H1 (cell line): ENCODE measurements at regions of chr20 and their contacts with region 1.

Region 1: DNA sequence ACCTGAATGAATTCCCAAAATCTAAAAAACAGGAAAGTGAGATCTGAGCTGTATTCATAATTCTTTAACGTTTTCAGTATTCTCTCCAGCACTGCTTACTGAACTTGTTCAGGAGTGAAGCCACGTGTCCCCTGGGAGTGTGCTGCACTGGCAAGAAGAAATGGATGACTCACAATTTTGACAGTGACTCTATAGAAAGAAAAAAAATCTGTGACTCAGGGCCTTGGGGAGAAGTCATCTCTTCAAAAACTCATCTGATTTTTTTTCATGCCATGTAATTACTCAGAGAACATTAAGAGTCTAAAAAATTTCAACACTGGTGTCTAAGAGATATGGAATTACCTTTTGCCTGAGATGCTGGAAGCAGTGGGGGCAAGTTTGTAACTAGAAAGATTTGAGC is 39.7 kb downstream of the ANKEF1 start:
- DNase-seq: no peak
- H3K4me3 ChIP-seq: no peak overlapping the region
- H3K27ac ChIP-seq: no peak overlapping the region
- H3K4me1 ChIP-seq: no peaks in the 10 kb centered on the region
- H3K27me3 ChIP-seq: peaks cover 0 to under 1% (median 0%) of the 10 kb centered on the region in 4 experiments; a peak in 1 of 7 replicates
- CTCF ChIP-seq: no peak
- EP300 ChIP-seq: no peak
- POLR2A ChIP-seq: no peak
- RAD21 ChIP-seq: no peak

Region 2: DNA sequence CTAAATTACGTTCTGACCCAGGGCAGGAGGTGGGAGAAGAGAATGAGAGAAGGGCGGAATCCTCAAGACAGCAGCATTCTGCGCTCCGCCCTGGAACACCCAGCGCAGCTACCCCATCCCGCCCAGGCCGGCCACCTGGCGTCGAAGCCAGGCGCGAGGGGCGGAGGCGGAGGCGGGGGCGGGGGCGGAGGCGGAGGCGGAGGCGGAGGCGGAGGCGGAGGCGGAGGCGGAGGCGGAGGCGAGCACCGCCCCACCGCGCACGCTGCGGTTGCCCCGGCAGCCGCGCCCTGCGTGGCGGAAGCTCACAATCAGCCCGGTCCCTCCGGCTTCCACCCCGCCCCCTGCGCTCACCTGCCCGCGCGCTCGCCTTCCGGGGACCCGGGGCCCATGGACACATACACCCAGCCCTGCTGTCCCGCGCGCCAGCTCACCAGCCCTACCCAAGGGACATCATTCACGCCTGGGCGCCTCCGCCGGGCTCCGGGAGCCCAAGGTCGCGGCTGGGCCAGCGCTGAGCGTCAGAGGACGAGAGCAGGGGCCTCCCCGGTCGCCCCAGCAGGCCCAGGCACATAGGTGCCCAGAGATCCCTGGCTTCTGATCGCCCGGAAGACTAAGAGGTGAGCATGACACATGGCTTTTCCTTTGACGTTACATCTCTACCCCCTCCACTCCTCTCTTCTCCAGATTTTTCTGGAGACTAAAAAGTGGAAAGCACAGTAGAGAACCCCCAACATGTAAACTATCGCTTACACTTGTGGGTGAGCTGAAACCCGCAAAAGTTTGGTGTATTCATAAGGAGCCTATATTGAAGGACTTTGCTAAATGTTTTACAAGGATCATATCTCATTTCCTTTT is 39.6 kb before region 1 on chr20 and contains the start of gene ANKEF1:
- CTCF ChIA-PET with region 1: interaction called, 17 read pairs
- POLR2A ChIA-PET with region 1: no interaction called
- DNase-seq: peak; percentile 29 to 88
- H3K4me3 ChIP-seq: peak within 1 kb of the TSS; percentile 42 to 73 (median 53)
- H3K27ac ChIP-seq: no peak within 1 kb of the TSS
- H3K4me1 ChIP-seq: peaks cover 0 to 3% (median 1%) of the 10 kb centered on the region in 4 experiments; a peak in 2 of 7 replicates
- H3K27me3 ChIP-seq: no peaks in the 10 kb centered on the region
- CTCF ChIP-seq: 0 out of 4 replicates have a peak, but pooled peaks of 1 of the 3 experiments have one; percentile 8
- EP300 ChIP-seq: peak in 1 of 2 experiments; percentile 11; a peak in 1 of 3 replicates
- POLR2A ChIP-seq: peak in 1 of 2 experiments; percentile 75; a peak in 2 of 3 replicates
- RAD21 ChIP-seq: peak in 1 of 2 experiments; percentile 17; a peak in 1 of 4 replicates
- total RNA-seq, gene ANKEF1: 9.8 and 10.0 TPM in 2 replicates

Region 3: GRCh38 chr20:10047427-10047826 is 27.1 kb before region 1 on chr20:
- CTCF ChIA-PET with region 1: interaction called, 13 read pairs
- POLR2A ChIA-PET with region 1: interaction called, 3 read pairs
- DNase-seq: peak; percentile 17 to 57
- H3K4me3 ChIP-seq: no peak overlapping the region
- H3K27ac ChIP-seq: no peak overlapping the region
- H3K4me1 ChIP-seq: no peaks in the 10 kb centered on the region
- H3K27me3 ChIP-seq: no peaks in the 10 kb centered on the region
- CTCF ChIP-seq: peak; percentile 55 to 73 (median 72)
- EP300 ChIP-seq: no peak
- POLR2A ChIP-seq: no peak
- RAD21 ChIP-seq: peak; percentile 51 to 58

Region 4: DNA sequence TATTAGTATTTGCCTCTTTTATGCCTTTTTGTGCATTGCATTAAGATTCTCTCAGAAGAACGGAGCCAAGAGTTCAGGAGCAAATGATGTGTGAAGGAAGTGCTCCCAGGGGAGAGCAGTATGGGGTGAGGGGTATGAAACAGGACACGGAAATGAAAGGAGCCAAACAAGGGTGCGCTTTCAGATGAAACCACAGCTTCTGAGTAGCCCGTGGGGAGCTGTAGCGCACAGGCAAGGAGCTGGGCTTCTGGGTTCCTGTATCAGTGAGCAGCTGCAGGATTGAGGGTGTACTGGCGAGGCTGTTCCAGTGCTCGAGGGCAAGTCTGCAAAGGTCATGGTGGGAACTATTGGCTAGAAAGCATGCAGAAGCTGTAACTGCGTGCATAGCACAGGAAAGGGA is 14.3 kb before region 1 on chr20:
- CTCF ChIA-PET with region 1: interaction called, 34 read pairs
- POLR2A ChIA-PET with region 1: no interaction called
- DNase-seq: no peak
- H3K4me3 ChIP-seq: no peak overlapping the region
- H3K27ac ChIP-seq: no peak overlapping the region
- H3K4me1 ChIP-seq: peaks cover 0 to 4% (median 0%) of the 10 kb centered on the region in 4 experiments; a peak in 2 of 7 replicates
- H3K27me3 ChIP-seq: no peaks in the 10 kb centered on the region
- CTCF ChIP-seq: no peak
- EP300 ChIP-seq: no peak
- POLR2A ChIP-seq: no peak
- RAD21 ChIP-seq: no peak

Region 5: GRCh38 chr20:10185741-10186558 is 111.4 kb after region 1 on chr20:
- CTCF ChIA-PET with region 1: no interaction called
- POLR2A ChIA-PET with region 1: no interaction called
- DNase-seq: no peak
- H3K4me3 ChIP-seq: no peak overlapping the region
- H3K27ac ChIP-seq: no peak overlapping the region
- H3K4me1 ChIP-seq: no peaks in the 10 kb centered on the region
- H3K27me3 ChIP-seq: no peaks in the 10 kb centered on the region
- CTCF ChIP-seq: no peak
- EP300 ChIP-seq: no peak
- POLR2A ChIP-seq: no peak
- RAD21 ChIP-seq: no peak